Activated CD4-positive, alpha-beta memory T cell treated with anti-CD3 and anti-CD28 coated beads for 36 hours (primary cell): ENCODE measurements at regions of chr2 and their contacts with region 1.

Region 1: DNA sequence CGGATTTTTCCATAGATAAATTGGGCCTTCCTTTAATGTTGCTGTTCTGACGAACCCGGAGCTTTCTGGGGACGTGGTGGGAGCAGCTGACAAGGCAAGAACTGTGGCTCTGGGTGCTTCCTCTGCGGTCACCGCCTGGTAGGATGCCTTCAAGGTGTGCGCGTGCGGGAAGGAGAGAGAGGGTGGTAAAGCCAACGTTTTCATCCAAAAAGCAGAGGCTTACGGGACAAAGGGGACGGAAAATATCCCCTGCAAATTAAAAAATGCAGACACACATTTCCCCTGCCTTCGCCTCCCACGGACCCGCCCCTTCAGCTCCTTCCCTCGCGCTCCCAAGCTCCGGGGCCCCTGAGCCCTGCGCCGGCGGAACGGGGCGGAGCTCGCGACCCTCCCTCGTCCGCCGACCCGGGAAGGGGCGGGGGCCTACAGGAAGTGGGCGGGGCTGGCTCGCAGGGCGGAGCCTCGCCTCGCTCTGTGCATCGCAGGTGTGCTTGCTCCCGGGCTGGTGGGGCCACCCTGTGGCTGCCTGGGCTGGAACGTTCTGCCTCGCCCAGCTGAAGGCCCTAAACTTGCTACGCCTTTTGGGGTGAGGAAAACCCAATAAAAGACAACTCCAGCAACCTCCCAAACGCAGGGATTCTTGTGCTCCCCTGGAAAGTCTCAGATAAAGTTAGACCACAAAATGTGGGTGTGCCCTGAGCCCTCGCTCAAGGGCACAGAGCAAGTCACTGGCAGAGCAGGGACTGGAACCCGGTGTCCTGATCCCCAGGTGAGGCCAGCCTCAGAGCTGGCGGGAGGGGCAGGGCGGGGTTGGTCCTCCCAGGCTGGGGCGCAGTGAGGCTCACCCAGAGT is 25.4 kb upstream of the SLC66A3 start:
- DNase-seq: peak; percentile 88
- H3K4me3 Mint-ChIP-seq: peak overlapping the region; percentile 62
- H3K27ac Mint-ChIP-seq: peak overlapping the region; percentile 33
- H3K4me1 Mint-ChIP-seq: peaks cover 28% of the 10 kb centered on the region
- H3K27me3 Mint-ChIP-seq: no peaks in the 10 kb centered on the region

Region 2: DNA sequence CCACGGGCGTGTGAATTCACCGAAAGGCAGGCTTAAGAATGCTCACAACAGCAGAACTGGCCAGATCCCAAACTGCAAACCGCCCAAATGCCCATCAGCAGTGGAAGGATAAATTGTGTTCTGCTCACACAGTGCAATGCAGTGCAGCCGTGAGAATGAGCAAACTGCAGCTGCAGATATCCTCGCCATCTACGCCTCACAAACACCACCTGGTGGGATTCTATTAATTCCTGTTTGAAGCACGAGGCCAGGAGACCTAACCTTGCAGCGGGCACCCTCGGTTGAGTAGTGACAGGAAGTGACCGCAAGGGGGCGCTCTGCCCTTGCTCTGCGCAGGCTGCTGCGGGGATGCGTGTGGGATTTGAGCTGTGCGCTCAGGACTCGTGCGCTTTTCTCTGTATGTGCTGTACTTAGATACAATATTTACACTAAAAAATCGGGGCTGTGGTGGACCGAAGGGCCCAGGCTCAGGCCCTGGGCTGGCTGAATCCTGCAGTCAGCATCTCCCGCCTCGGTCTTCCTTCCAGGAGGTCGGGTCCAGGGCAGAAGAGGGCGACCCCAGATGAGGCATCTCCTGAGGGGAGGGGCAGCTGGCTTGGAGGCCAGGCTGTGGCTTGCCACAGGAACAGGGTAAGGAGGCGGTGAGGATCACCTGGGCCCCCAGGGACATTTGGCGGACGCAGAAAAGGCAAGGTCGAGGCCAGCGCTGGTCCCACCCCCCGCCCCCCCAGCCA is 297.5 kb before region 1 on chr2:
- CTCF ChIA-PET with region 1: interaction called, 173 read pairs
- POLR2A ChIA-PET with region 1: interaction called, 3 read pairs
- intact Hi-C with region 1: loop called (anchors 1 kb)
- DNase-seq: peak; percentile 89
- H3K4me3 Mint-ChIP-seq: no peak overlapping the region
- H3K27ac Mint-ChIP-seq: no peak overlapping the region
- H3K4me1 Mint-ChIP-seq: peaks cover 3% of the 10 kb centered on the region
- H3K27me3 Mint-ChIP-seq: peaks cover 12% of the 10 kb centered on the region

Region 3: DNA sequence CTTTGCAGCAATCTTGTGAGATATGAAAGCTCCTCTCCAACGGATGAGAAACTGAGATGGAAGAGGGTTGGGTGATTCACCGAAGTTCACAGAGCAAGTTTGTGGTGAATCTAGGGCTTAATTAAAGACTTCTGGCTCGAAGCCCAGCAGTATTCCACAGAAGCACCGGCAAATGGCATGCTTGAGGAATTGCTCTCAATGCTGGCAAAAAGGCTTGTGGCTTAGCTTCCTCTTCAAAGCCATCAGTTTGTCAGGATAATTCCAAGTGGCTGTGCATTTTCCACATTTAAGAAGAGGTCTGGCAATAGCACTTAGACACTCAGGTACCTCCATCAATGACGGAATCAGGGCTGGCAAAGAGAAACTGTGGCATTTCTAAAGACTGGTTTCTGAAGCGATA is 73.2 kb before region 1 on chr2:
- CTCF ChIA-PET with region 1: no interaction called
- POLR2A ChIA-PET with region 1: no interaction called
- intact Hi-C with region 1: no loop called
- DNase-seq: no peak
- H3K4me3 Mint-ChIP-seq: no peak overlapping the region
- H3K27ac Mint-ChIP-seq: no peak overlapping the region
- H3K4me1 Mint-ChIP-seq: no peaks in the 10 kb centered on the region
- H3K27me3 Mint-ChIP-seq: peaks cover 3% of the 10 kb centered on the region

Region 4: DNA sequence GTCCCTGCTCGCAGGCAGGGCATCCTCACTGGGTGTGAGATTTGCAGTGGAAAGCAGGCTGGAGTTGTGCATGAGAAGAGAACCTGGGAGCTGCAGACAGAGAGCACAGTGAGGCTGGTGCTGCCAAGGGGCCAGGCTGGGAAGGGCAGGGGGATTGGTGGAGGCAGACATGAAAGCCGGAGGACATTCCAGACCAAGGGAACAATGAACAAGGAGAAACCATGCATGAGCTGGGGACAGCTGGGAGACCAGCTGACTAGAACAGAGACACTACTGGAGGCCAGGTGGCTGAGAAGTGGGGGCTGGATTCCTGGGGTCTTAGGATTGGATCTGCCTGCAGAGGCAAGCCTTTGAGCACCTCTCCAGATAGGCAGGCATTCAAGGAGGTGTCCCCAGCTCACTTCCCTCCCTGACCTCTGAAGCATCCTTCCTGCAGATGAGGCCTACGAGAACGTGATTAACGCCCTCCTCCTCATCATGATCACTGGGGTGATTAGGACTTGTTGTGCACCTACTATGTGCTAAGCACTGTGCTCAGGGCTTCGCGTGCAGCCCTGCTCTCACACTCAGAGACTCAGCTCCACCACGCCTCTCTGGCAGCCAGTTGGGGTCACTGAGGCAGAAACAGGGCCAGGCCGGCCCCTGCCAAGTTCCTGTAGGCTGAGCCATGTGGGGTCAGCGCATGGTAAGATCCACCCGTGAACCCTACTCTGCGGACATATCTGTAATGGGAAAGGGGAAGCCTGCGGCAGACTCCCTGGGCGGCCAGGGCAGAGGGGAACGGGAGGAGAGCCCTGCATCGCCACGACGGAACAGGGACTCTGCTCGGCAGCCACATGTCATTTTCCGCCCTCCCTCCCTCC is 49.3 kb before region 1 on chr2:
- CTCF ChIA-PET with region 1: no interaction called
- POLR2A ChIA-PET with region 1: no interaction called
- intact Hi-C with region 1: no loop called
- DNase-seq: no peak
- H3K4me3 Mint-ChIP-seq: no peak overlapping the region
- H3K27ac Mint-ChIP-seq: no peak overlapping the region
- H3K4me1 Mint-ChIP-seq: no peaks in the 10 kb centered on the region
- H3K27me3 Mint-ChIP-seq: no peaks in the 10 kb centered on the region

Region 5: GRCh38 chr2:11182951-11183350 is 53.1 kb after region 1 on chr2:
- CTCF ChIA-PET with region 1: interaction called, 11 read pairs
- POLR2A ChIA-PET with region 1: no interaction called
- intact Hi-C with region 1: no loop called
- DNase-seq: no peak
- H3K4me3 Mint-ChIP-seq: no peak overlapping the region
- H3K27ac Mint-ChIP-seq: no peak overlapping the region
- H3K4me1 Mint-ChIP-seq: no peaks in the 10 kb centered on the region
- H3K27me3 Mint-ChIP-seq: no peaks in the 10 kb centered on the region

Region 6: DNA sequence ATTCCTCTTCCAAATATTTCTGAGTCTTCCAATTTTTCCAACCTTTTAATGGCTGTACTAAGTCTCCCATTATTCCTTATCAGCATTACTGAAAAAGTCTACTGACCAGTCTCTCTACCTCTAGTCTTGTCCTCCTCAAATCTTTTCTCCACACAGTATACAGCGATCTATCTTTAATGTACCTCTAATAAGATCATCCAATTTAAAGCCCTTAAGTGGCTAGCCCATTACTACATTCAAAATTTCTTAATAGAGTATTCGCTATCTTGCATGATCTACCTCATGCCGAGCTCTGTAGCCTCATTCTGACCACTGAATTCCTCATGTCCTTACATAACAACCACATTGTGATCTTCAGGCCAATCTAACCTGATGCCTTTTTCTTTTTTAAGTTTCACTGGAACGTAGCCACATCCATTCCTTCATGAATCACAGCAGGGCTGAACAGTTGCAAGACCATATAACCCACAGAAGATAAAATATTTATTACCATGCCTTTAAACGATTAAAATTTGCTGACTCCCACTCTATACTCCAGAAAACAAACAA is 83.3 kb after region 1 on chr2:
- CTCF ChIA-PET with region 1: no interaction called
- POLR2A ChIA-PET with region 1: no interaction called
- intact Hi-C with region 1: no loop called
- DNase-seq: no peak
- H3K4me3 Mint-ChIP-seq: no peak overlapping the region
- H3K27ac Mint-ChIP-seq: no peak overlapping the region
- H3K4me1 Mint-ChIP-seq: no peaks in the 10 kb centered on the region
- H3K27me3 Mint-ChIP-seq: no peaks in the 10 kb centered on the region

Region 7: GRCh38 chr2:11446733-11447248 is 317.0 kb after region 1 on chr2:
- CTCF ChIA-PET with region 1: interaction called, 47 read pairs
- POLR2A ChIA-PET with region 1: no interaction called
- intact Hi-C with region 1: loop called (anchors 1 kb)
- DNase-seq: peak; percentile 50
- H3K4me3 Mint-ChIP-seq: no peak overlapping the region
- H3K27ac Mint-ChIP-seq: no peak overlapping the region
- H3K4me1 Mint-ChIP-seq: no peaks in the 10 kb centered on the region
- H3K27me3 Mint-ChIP-seq: no peaks in the 10 kb centered on the region

Region 8: GRCh38 chr2:11583840-11584524 is 454.2 kb after region 1 on chr2:
- CTCF ChIA-PET with region 1: interaction called, 123 read pairs
- POLR2A ChIA-PET with region 1: interaction called, 3 read pairs
- intact Hi-C with region 1: loop called (anchors 1 kb)
- DNase-seq: peak; percentile 95
- H3K4me3 Mint-ChIP-seq: no peak overlapping the region
- H3K27ac Mint-ChIP-seq: no peak overlapping the region
- H3K4me1 Mint-ChIP-seq: peaks cover 11% of the 10 kb centered on the region
- H3K27me3 Mint-ChIP-seq: peaks cover 19% of the 10 kb centered on the region

Region 9: GRCh38 chr2:11697103-11697871 is 567.5 kb after region 1 on chr2:
- CTCF ChIA-PET with region 1: no interaction called
- POLR2A ChIA-PET with region 1: no interaction called
- intact Hi-C with region 1: no loop called
- DNase-seq: no peak
- H3K4me3 Mint-ChIP-seq: no peak overlapping the region
- H3K27ac Mint-ChIP-seq: no peak overlapping the region
- H3K4me1 Mint-ChIP-seq: peaks cover 3% of the 10 kb centered on the region
- H3K27me3 Mint-ChIP-seq: no peaks in the 10 kb centered on the region